HEK293 (cell line): ENCODE measurements at regions of chr19 and their contacts with region 1.

Region 1: GRCh38 chr19:48965040-48965805 is at the start of gene FTL:
- H3K4me3 ChIP-seq: peak within 1 kb of the TSS; percentile 40
- H3K27ac ChIP-seq: peak within 1 kb of the TSS; percentile 82
- H3K4me1 ChIP-seq: peaks cover 20% of the 10 kb centered on the region
- CTCF ChIP-seq: 0 out of 2 replicates have a peak, but pooled peaks have one; percentile 12

Region 2: DNA sequence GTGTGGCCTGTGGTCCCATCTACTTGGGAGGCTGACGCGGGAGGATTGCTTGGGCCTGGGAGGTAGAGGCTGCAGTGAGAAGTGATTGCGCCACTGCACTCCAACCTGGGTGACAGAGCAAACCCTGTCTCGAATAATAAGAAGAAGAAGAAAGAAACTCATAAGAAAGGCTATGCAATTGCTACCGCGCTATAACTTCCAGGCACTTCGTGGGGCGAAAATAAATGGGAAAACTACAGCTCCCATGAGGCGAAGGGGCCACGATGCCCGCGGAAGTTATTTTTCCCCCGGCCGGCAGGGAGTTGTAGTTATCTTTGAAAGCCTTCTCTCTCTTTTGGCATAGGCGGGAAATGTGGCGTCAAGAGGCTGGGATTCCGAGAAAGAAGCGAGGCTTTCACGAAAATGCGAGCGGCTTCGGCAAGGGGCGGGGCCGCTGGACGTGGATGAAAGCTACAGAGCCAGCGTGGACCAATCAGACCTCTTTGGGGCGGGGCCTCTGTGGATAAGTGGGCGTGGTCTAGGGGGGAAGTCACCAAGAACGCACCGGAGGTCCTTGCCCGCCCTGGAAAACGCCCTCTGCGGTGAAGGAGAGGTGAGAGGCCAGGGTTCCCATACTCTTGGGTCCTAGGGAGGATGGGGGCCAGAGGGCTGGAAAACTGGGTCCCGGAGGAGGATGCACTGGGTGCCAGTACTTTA is 65.3 kb before region 1 on chr19 and contains the start of gene NUCB1:
- CTCF ChIA-PET with region 1: interaction called, 3 read pairs
- POLR2A ChIA-PET with region 1: interaction called, 10 read pairs
- H3K4me3 ChIP-seq: peak within 1 kb of the TSS; percentile 54
- H3K27ac ChIP-seq: peak within 1 kb of the TSS; percentile 62
- H3K4me1 ChIP-seq: no peaks in the 10 kb centered on the region
- CTCF ChIP-seq: peak; percentile 22; the same call in 1 of the 2 replicates

Region 3: DNA sequence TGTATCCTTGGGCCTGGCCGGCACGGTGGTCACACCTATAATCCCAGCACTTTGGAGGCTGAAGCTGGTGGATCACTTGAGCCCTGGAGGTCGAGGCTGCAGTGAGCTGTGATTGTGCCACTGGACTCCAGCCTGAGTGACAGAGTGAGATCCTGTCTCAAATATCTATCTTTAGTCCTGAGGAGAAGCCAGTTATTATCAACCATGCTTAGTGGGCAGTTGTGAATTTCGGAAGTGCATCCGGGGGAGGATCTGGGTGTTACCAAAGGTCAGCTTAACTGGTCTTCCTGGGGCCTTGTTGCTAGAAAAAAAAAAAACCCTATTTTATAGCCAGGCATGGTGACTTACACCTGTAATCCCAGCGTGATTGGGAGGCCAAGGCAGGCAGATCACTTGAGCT is 22.1 kb before region 1 on chr19:
- CTCF ChIA-PET with region 1: interaction called, 10 read pairs
- POLR2A ChIA-PET with region 1: no interaction called
- H3K4me3 ChIP-seq: no peak overlapping the region
- H3K27ac ChIP-seq: no peak overlapping the region
- H3K4me1 ChIP-seq: no peaks in the 10 kb centered on the region
- CTCF ChIP-seq: no peak

Region 4: GRCh38 chr19:48954595-48955310 is 10.5 kb before region 1 on chr19 and contains the start of gene BAX:
- CTCF ChIA-PET with region 1: interaction called, 9 read pairs
- POLR2A ChIA-PET with region 1: interaction called, 10 read pairs
- H3K4me3 ChIP-seq: peak within 1 kb of the TSS; percentile 93
- H3K27ac ChIP-seq: peak within 1 kb of the TSS; percentile 93
- H3K4me1 ChIP-seq: peaks cover 5% of the 10 kb centered on the region
- CTCF ChIP-seq: peak; percentile 41

Region 5: GRCh38 chr19:48975947-48976847 is 11.0 kb after region 1 on chr19:
- CTCF ChIA-PET with region 1: interaction called, 19 read pairs
- POLR2A ChIA-PET with region 1: interaction called, 34 read pairs
- H3K4me3 ChIP-seq: no peak overlapping the region
- H3K27ac ChIP-seq: no peak overlapping the region
- H3K4me1 ChIP-seq: no peaks in the 10 kb centered on the region
- CTCF ChIP-seq: no peak